ENCODE measurements at regions of chr16 and their contacts with region 1.

Region 1: GRCh38 chr16:4402439-4403132 is 13.8 kb downstream of the CORO7 start:
- DNase-seq: peak; percentile 85
- H3K27ac ChIP-seq: peak overlapping the region; percentile 41
- CTCF ChIP-seq: peak; percentile 93

Region 2: DNA sequence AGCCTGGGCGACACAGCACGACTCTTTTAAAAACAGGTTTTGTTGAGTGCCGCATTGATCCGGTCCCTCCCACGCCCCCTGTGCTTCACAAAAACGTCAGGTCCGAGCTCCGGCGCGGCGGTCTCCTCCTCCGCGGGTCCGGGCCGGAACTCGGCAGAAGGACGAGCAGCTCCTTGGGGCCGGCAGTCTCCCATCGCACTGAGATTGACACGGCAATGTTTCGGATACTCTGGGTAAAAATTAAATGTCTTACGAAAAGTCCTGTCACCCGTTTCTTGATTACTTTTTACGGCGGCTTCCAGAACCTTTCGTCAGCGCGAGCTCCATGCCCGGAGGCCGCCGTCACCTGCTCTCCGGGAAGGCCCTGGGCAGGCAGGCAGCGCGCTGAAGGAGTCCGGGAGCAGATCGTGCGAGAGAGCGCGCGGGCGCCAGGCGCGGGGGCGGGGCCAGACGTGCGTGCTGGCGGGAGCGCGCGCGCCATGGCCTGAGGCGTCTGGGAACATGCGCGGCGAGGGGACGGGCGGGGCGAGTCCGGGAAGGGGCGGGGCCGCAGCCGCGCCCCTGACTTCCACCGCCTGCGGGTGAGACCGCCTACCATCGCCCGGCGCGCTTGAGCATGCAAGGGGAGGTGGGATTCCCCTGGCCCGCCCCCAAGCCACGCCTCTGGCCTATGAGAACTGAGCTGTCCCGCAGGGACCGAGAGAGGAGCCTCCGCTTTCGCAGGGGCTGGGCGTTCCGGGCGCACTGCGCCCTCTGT is 149.0 kb before region 1 on chr16:
- CTCF ChIA-PET with region 1: interaction called, 10 read pairs
- POLR2A ChIA-PET with region 1: no interaction called
- DNase-seq: peak; percentile 96
- H3K27ac ChIP-seq: peak overlapping the region; percentile 89
- CTCF ChIP-seq: no peak

Region 3: GRCh38 chr16:4350787-4351659 is 51.6 kb before region 1 on chr16 and contains the start of gene PAM16:
- CTCF ChIA-PET with region 1: interaction called, 15 read pairs
- POLR2A ChIA-PET with region 1: no interaction called
- DNase-seq: peak; percentile 95
- H3K27ac ChIP-seq: peak within 1 kb of the TSS; percentile 85
- CTCF ChIP-seq: 0 out of 2 replicates have a peak, but pooled peaks have one; percentile 10

Region 4: DNA sequence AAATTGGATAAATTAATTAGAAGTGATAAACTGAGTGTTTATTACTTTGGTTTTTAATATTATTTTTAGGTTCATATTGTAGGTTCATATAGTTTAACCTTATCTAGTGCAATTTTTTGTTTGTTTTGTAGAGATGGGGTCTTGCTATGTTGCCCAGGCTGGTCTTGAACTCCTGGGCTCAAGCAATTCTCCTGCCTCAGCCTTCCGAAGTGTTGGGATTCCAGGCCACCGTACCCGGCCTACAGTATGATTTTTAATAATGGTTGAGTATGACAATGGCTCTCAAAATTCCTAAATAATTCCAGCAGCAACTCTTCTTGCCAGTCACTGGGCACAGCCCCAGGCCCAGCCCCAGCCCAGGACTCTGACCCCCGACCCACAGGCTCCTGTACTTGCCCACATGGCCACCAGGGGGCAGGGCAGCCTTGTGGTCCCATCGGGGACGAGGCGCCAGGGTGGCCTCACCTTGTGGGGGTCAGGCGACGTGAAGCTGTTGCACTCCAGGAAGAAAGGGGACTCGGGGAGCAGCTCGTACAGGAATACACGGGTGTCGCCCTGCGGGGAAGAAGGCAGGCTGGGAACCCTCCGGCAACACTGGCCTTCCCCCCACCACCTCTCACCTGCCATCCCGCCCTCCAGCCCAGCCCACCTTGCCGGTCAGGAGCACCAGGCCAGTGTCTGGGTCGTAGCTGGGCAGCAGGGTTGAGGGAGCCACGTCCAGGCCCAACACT is 43.6 kb before region 1 on chr16:
- CTCF ChIA-PET with region 1: interaction called, 74 read pairs
- POLR2A ChIA-PET with region 1: no interaction called
- DNase-seq: peak; percentile 46
- H3K27ac ChIP-seq: peak overlapping the region; percentile 22; the same call in 1 of the 2 replicates
- CTCF ChIP-seq: peak; percentile 87

Region 5: DNA sequence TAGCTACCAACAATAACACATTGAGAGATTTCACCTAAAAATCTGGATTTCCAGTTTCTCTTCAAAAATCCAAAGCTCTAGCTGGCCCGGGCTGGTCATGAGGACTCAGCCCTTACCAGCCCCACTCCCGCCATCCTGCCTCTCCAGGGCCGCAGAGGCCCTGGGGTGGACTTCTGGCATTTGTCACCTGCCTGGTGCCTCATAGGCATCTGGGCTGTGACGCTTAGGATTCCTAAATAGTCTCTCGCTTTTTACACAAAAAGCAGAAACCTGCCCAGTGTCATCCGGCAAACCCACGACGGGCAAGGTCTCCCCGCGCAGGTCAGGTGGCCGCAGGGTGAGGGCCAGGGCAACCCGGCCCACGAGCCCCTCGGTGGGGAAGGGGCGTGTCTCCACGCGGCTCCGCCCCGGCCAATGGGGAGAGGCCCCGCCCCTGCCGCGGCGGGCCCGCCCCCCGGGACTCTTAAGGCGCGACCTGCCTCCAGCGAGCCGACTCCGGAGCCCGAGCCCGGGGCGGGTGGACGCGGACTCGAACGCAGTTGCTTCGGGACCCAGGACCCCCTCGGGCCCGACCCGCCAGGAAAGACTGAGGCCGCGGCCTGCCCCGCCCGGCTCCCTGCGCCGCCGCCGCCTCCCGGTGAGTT is 31.1 kb before region 1 on chr16 and contains the start of gene VASN:
- CTCF ChIA-PET with region 1: interaction called, 31 read pairs
- POLR2A ChIA-PET with region 1: no interaction called
- DNase-seq: peak; percentile 91
- H3K27ac ChIP-seq: peak within 1 kb of the TSS; percentile 99
- CTCF ChIP-seq: no peak

Region 6: GRCh38 chr16:4377573-4378143 is 24.9 kb before region 1 on chr16:
- CTCF ChIA-PET with region 1: interaction called, 31 read pairs
- POLR2A ChIA-PET with region 1: no interaction called
- DNase-seq: no peak
- H3K27ac ChIP-seq: peak overlapping the region; percentile 99
- CTCF ChIP-seq: no peak

Region 7: DNA sequence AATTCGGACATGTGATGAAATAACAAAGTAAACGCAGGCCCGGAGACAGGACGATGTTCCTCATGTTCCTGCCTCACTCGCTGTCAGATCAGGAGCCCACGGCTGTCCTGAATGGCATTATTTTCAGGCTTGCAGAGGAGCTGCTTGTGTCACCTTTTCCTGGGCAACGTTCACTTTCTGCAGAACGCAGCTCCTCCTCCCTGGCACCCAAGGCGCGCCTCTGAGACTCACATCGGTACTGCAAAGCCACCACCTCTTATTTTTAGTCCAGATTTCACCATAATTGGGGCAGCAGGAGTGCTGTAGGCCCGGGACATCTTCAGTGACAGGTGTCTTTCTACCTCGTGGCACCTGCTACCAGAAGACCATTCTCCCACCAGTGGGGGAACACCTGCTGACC is 145.5 kb after region 1 on chr16:
- CTCF ChIA-PET with region 1: interaction called, 10 read pairs
- POLR2A ChIA-PET with region 1: no interaction called
- DNase-seq: no peak
- H3K27ac ChIP-seq: no peak overlapping the region
- CTCF ChIP-seq: no peak